ENCODE measurements at regions of chr1 and their contacts with region 1.

Region 1: GRCh38 chr1:201709564-201710295 is 119.2 kb upstream of the IPO9 start:
- DNase-seq: peak; percentile 87
- H3K4me3 Mint-ChIP-seq: no peak overlapping the region
- H3K27ac Mint-ChIP-seq: no peak overlapping the region
- H3K4me1 Mint-ChIP-seq: peaks cover 52% of the 10 kb centered on the region
- H3K27me3 Mint-ChIP-seq: no peaks in the 10 kb centered on the region
- CTCF ChIP-seq: peak; percentile 100

Region 2: DNA sequence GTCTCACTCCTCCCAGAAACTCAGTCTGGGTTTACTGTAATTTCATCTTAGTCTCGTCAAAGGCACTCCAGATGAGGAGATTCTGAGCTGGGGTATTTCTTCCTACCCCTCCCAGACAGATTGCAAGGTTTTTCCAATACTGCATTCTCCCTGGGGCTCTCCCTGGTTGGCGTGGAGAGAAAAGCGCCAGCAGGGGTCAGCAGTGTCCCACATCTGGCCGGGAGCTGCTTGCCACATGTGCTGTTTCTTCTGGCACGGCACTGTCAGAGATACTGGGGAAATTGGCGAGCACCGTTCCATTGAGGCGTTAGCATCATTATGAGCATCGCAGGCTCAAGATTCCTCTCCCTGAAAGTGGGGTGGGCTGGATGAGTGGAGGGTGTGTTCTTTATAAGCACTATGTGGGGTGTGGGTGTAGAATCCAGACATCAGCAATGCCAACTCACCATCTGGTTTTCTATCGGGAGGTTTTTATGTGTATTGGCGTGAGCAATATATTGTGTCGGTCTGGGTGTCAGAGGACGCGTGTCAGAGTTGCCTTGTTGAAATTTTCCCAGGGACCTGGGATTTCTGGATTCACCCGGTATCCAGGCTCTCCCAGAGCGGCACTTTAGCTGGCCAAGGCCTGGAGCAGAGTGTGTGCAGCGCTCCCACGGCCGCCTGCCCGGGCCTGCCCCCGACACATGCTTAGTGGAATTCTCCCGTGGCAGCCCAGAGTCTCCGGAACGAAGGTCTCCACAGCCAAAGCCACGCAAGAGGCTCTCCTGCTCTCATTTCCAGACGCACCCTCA is 178.8 kb before region 1 on chr1:
- CTCF ChIA-PET with region 1: interaction called, 241 read pairs
- POLR2A ChIA-PET with region 1: interaction called, 5 read pairs
- intact Hi-C with region 1: loop called (anchors 1 kb)
- DNase-seq: peak; percentile 91
- H3K4me3 Mint-ChIP-seq: no peak overlapping the region
- H3K27ac Mint-ChIP-seq: peak overlapping the region; percentile 46
- H3K4me1 Mint-ChIP-seq: peaks cover 9% of the 10 kb centered on the region
- H3K27me3 Mint-ChIP-seq: no peaks in the 10 kb centered on the region
- CTCF ChIP-seq: peak; percentile 99

Region 3: DNA sequence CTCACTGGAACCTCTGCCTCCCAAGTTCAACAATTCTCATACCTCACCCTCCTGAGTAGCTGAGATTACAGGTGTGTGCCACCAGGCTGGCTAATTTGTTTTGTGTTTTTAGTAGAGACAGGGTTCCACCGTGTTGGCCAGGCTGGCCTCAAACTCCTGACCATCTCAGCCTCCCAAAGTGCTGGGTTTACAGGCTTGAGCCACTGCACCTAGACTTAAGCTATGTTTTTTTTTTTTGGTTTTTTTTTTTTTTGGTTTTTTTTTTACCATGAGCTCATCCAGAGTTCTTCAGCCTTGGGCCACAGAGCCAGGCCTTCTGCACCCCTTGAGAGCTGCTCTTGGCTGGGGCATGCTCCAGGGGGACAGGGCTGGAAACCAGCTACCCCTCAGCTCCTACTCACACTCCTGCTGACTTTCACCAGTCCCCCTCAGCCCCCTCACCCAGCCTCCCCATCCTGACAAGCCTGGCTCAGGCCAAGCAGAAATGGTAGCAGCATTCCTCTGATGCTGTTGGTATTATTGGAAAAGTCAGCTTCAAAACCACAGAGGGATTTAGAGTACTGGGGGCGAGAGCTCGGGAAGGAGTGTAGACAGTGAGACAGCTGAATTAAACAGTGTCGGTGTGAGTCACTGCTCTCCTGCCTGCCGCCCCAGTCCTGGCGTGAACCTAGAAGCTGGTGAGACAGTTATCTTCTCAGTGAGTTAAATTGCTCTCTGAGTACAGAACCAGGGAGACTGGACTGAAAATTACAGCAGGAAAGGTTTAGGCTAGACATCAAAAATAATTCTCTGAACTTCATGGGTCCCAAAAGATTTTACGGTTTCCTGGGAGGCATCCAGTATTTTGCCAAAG is 107.1 kb before region 1 on chr1:
- CTCF ChIA-PET with region 1: interaction called, 21 read pairs
- POLR2A ChIA-PET with region 1: no interaction called
- intact Hi-C with region 1: no loop called
- DNase-seq: peak; percentile 92
- H3K4me3 Mint-ChIP-seq: no peak overlapping the region
- H3K27ac Mint-ChIP-seq: no peak overlapping the region
- H3K4me1 Mint-ChIP-seq: peaks cover 37% of the 10 kb centered on the region
- H3K27me3 Mint-ChIP-seq: no peaks in the 10 kb centered on the region
- CTCF ChIP-seq: no peak

Region 4: GRCh38 chr1:201696217-201696761 is 13.4 kb before region 1 on chr1:
- CTCF ChIA-PET with region 1: interaction called, 31 read pairs
- POLR2A ChIA-PET with region 1: interaction called, 6 read pairs
- intact Hi-C with region 1: no loop called
- DNase-seq: peak; percentile 100
- H3K4me3 Mint-ChIP-seq: peak overlapping the region; percentile 28
- H3K27ac Mint-ChIP-seq: peak overlapping the region; percentile 44
- H3K4me1 Mint-ChIP-seq: peaks cover 32% of the 10 kb centered on the region
- H3K27me3 Mint-ChIP-seq: no peaks in the 10 kb centered on the region
- CTCF ChIP-seq: peak; percentile 6

Region 5: DNA sequence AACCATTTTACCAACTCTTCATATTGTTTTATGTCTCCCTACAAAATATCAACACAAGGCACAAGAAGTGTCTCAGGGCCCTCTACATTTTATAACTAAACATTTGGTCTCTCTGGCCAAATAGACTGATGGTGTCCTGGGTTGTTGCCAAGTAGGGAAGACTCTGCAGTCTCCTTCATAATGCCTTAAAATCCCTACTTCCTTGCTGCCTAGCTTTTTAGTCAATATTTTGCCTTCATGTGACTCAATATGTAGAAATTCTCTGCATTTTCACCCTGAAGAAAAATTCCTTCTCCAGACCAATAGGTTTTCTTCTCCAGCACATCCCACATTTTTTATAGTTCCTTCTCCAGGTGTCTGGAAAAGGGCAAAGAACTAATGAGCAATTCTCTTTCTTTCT is 46.7 kb after region 1 on chr1:
- CTCF ChIA-PET with region 1: interaction called, 1,744 read pairs
- POLR2A ChIA-PET with region 1: interaction called, 18 read pairs
- intact Hi-C with region 1: loop called (anchors 5 kb)
- DNase-seq: no peak
- H3K4me3 Mint-ChIP-seq: no peak overlapping the region
- H3K27ac Mint-ChIP-seq: no peak overlapping the region
- H3K4me1 Mint-ChIP-seq: peaks cover 42% of the 10 kb centered on the region
- H3K27me3 Mint-ChIP-seq: no peaks in the 10 kb centered on the region
- CTCF ChIP-seq: no peak

Region 6: DNA sequence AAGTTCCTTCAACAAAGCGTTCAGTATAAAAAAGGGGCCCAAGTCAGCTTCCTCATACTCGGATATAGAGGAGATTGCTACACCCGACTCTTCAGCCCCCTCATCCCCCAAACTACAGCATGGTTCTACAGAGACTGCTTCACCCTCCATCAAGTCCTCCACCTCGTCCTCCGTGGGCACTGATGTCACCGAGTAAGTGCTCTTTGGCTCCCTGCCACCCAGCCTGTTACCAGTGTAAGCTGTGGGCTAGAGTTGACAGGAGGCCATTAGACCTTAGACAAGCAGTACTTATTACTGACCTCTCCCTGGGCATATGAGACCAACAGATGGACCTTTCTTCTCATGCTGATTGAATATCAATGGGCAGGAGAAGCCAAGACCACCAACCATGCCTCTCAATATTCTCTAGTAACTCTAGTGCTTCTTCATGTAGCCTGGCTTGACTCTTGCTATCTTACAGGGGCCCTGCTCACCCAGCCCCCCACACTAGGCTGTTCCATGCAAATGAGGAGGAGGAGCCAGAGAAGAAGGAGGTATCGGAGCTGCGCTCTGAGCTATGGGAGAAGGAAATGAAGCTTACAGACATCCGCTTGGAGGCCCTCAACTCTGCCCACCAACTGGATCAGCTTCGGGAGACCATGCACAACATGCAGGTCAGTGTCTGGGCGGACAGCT is 98.4 kb after region 1 on chr1:
- CTCF ChIA-PET with region 1: interaction called, 44 read pairs
- POLR2A ChIA-PET with region 1: interaction called, 7 read pairs
- intact Hi-C with region 1: no loop called
- DNase-seq: no peak
- H3K4me3 Mint-ChIP-seq: no peak overlapping the region
- H3K27ac Mint-ChIP-seq: no peak overlapping the region
- H3K4me1 Mint-ChIP-seq: no peaks in the 10 kb centered on the region
- H3K27me3 Mint-ChIP-seq: no peaks in the 10 kb centered on the region
- CTCF ChIP-seq: no peak

Region 7: GRCh38 chr1:201970334-201971159 is 260.8 kb after region 1 on chr1:
- CTCF ChIA-PET with region 1: no interaction called
- POLR2A ChIA-PET with region 1: no interaction called
- intact Hi-C with region 1: loop called (anchors 2 kb)
- DNase-seq: no peak
- H3K4me3 Mint-ChIP-seq: no peak overlapping the region
- H3K27ac Mint-ChIP-seq: no peak overlapping the region
- H3K4me1 Mint-ChIP-seq: peaks cover 15% of the 10 kb centered on the region
- H3K27me3 Mint-ChIP-seq: peaks cover 8% of the 10 kb centered on the region
- CTCF ChIP-seq: no peak